ENCODE measurements at regions of chr14 and their contacts with region 1.

Region 1: GRCh38 chr14:30621940-30622830 is at the start of gene SCFD1:
- DNase-seq: peak; percentile 96
- ATAC-seq: peak; percentile 97
- H3K4me3 Mint-ChIP-seq: peak within 1 kb of the TSS; percentile 88
- H3K27ac Mint-ChIP-seq: peak within 1 kb of the TSS; percentile 94
- H3K4me1 Mint-ChIP-seq: peaks cover 40% of the 10 kb centered on the region
- H3K27me3 Mint-ChIP-seq: no peaks in the 10 kb centered on the region
- CTCF ChIP-seq: no peak
- total RNA-seq, gene SCFD1: 61.6 to 67.2 TPM

Region 2: DNA sequence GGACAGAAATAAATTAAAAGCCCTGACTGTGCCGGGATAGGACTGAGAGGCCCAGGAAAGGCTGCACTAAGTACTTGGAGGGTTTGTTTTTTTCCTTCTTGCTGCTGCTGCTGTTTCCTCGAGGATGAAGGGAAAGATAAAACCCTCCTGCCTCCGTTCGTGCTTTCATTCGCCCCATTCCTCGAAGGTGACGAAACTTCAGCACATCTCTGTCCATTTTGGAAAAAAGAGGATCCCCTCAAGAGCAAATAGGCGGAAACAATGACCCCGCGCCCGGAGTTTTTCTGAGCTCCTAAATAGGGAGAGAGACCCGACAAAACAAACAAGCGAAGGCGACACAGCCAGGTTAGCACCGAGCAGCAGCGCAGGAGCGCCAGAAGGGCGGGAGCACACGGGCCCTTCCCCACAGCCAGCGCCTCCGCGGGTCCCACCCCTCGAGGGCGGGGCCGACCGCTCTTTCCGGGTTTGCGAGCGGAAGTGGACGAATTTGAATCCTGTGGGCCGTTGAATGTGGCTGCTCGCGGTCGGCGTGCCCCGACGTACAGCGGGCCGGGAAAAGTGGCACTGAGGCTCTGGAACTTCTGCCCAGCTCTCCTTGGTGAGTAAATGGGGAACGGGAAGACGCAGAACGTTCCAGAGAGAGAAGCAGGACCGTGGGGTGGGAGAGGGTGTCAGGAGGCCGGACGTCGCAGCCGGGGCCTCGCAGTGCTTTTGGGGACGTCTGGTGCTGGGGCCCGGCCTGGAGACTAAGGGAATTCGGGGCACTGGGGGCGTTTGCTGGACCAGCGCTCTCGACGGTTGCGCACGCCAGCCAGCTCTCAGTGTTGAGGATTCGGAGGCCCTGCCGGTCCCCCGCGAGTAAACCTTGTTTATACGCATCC is 63.3 kb before region 1 on chr14 and contains the start of gene G2E3:
- CTCF ChIA-PET with region 1: interaction called, 3 read pairs
- POLR2A ChIA-PET with region 1: no interaction called
- intact Hi-C with region 1: loop called (anchors 5 kb)
- DNase-seq: peak; percentile 90
- ATAC-seq: peak; percentile 100
- H3K4me3 Mint-ChIP-seq: peak within 1 kb of the TSS; percentile 98
- H3K27ac Mint-ChIP-seq: peak within 1 kb of the TSS; percentile 100
- H3K4me1 Mint-ChIP-seq: peaks cover 26% of the 10 kb centered on the region
- H3K27me3 Mint-ChIP-seq: peaks cover 4% of the 10 kb centered on the region
- CTCF ChIP-seq: no peak
- total RNA-seq, gene G2E3: 21.5 to 27.0 TPM

Region 3: GRCh38 chr14:30632730-30633129 is 10.5 kb after region 1 on chr14:
- CTCF ChIA-PET with region 1: interaction called, 3 read pairs
- POLR2A ChIA-PET with region 1: interaction called, 11 read pairs
- intact Hi-C with region 1: no loop called
- DNase-seq: no peak
- ATAC-seq: no peak
- H3K4me3 Mint-ChIP-seq: no peak overlapping the region
- H3K27ac Mint-ChIP-seq: no peak overlapping the region
- H3K4me1 Mint-ChIP-seq: peaks cover 11% of the 10 kb centered on the region
- H3K27me3 Mint-ChIP-seq: no peaks in the 10 kb centered on the region
- CTCF ChIP-seq: no peak

Measured in activated CD8-positive, alpha-beta T cell treated with anti-CD3 and anti-CD28 coated beads for 36 hours (primary cell).